ENCODE measurements at regions of chr1 and their contacts with region 1.

Region 1: GRCh38 chr1:231866392-231867331 is 240.1 kb downstream of the DISC1 start:
- DNase-seq: no peak
- ATAC-seq: peak; percentile 47
- H3K4me3 ChIP-seq: no peak overlapping the region
- H3K27ac ChIP-seq: no peak overlapping the region
- H3K4me1 ChIP-seq: no peaks in the 10 kb centered on the region
- H3K27me3 ChIP-seq: no peaks in the 10 kb centered on the region; a peak in 1 of 4 replicates
- CTCF ChIP-seq: peak; percentile 73 to 81 (median 79)
- EP300 ChIP-seq: no peak
- POLR2A ChIP-seq: no peak
- RAD21 ChIP-seq: peak; percentile 78

Region 2: GRCh38 chr1:230661976-230662375 is 1204.7 kb before region 1 on chr1:
- CTCF ChIA-PET with region 1: no interaction called
- POLR2A ChIA-PET with region 1: no interaction called
- RAD21 ChIA-PET with region 1: no interaction called
- SMC1A ChIA-PET with region 1: no interaction called
- in situ Hi-C with region 1: no loop called
- intact Hi-C with region 1: no loop called
- DNase-seq: no peak
- ATAC-seq: no peak
- H3K4me3 ChIP-seq: no peak overlapping the region
- H3K27ac ChIP-seq: no peak overlapping the region
- H3K4me1 ChIP-seq: no peaks in the 10 kb centered on the region
- H3K27me3 ChIP-seq: no peaks in the 10 kb centered on the region
- CTCF ChIP-seq: no peak
- EP300 ChIP-seq: no peak
- POLR2A ChIP-seq: no peak
- RAD21 ChIP-seq: no peak

Region 3: DNA sequence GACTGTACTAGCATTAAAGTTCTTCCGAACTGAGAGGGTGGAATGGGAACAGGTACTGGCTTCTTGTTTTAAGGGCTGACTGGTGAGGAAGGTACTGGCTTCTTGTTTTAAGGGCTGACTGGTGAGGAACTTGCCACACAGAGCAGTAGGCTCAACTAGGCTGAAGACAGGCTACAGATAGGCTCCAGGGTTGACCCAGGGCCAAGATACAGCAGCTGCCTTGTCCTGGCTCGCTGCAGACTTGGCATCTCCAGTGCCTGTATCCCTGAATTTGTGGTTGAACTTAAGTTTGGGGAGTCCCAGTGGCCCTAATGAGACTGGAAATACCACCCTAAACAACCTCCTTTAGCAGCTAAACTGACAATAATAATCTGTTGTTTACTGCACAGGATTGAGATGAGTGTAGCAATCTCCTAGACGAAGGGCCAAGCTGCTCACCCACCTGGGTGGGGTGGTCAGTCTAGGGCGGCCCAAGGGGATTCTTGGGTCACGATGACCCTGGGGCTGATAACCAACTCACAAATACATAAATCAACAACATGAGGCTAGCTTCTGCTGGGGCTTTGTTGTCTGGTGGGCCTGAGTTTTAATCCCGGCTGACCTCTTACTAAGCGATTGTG is 13.0 kb before region 1 on chr1:
- CTCF ChIA-PET with region 1: interaction called, 20 read pairs
- POLR2A ChIA-PET with region 1: no interaction called
- RAD21 ChIA-PET with region 1: no interaction called
- SMC1A ChIA-PET with region 1: interaction called, 3 read pairs
- in situ Hi-C with region 1: no loop called
- intact Hi-C with region 1: no loop called
- DNase-seq: no peak
- ATAC-seq: no peak
- H3K4me3 ChIP-seq: no peak overlapping the region
- H3K27ac ChIP-seq: no peak overlapping the region
- H3K4me1 ChIP-seq: no peaks in the 10 kb centered on the region
- H3K27me3 ChIP-seq: no peaks in the 10 kb centered on the region
- CTCF ChIP-seq: no peak
- EP300 ChIP-seq: no peak
- POLR2A ChIP-seq: no peak
- RAD21 ChIP-seq: no peak

Region 4: DNA sequence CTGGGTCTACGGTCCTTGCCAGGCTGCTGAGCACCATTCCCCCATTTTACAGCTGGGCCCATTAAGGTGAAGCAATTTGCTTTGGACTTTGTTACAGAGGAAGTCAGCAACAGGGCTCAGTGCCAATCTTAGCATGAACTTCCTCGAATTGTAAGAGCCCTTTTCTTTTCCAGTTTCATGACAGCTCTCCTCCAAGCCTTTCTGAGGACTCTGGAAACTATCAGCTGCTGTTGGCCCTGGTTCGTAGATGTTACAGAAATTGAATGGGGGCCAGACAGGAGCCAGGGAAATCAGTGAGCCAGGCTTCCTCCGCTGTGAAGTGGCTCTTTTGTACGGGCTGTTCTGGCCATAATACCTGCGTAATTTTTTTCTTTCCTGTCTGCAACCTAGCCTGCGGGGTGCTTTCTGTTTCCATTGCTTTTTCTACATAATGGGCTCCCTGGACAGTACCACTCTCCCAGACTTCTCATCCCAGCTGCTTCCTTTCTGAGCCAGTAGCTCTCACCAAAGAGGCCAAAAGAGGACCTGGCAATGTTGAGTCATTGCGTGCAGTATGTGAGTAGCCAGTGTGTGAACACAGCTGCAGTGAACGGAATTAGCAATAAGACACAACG is 146.2 kb after region 1 on chr1:
- CTCF ChIA-PET with region 1: no interaction called
- POLR2A ChIA-PET with region 1: no interaction called
- RAD21 ChIA-PET with region 1: no interaction called
- SMC1A ChIA-PET with region 1: no interaction called
- in situ Hi-C with region 1: no loop called
- intact Hi-C with region 1: no loop called
- DNase-seq: no peak
- ATAC-seq: no peak
- H3K4me3 ChIP-seq: no peak overlapping the region
- H3K27ac ChIP-seq: no peak overlapping the region
- H3K4me1 ChIP-seq: no peaks in the 10 kb centered on the region
- H3K27me3 ChIP-seq: no peaks in the 10 kb centered on the region; a peak in 1 of 4 replicates
- CTCF ChIP-seq: no peak
- EP300 ChIP-seq: no peak
- POLR2A ChIP-seq: no peak
- RAD21 ChIP-seq: no peak

Region 5: GRCh38 chr1:232620356-232620969 is 753.8 kb after region 1 on chr1:
- CTCF ChIA-PET with region 1: no interaction called
- POLR2A ChIA-PET with region 1: no interaction called
- RAD21 ChIA-PET with region 1: no interaction called
- SMC1A ChIA-PET with region 1: no interaction called
- in situ Hi-C with region 1: no loop called
- intact Hi-C with region 1: loop called (anchors 5 kb)
- DNase-seq: no peak
- ATAC-seq: no peak
- H3K4me3 ChIP-seq: no peak overlapping the region
- H3K27ac ChIP-seq: no peak overlapping the region
- H3K4me1 ChIP-seq: no peaks in the 10 kb centered on the region
- H3K27me3 ChIP-seq: no peaks in the 10 kb centered on the region; a peak in 1 of 4 replicates
- CTCF ChIP-seq: no peak
- EP300 ChIP-seq: no peak
- POLR2A ChIP-seq: no peak
- RAD21 ChIP-seq: no peak